ENCODE measurements at regions of chr3 and their contacts with region 1.

Region 1: GRCh38 chr3:49120438-49121131 is at the start of gene USP19:
- DNase-seq: peak; percentile 96
- H3K4me3 Mint-ChIP-seq: peak within 1 kb of the TSS; percentile 85
- H3K27ac Mint-ChIP-seq: peak within 1 kb of the TSS; percentile 86
- H3K4me1 Mint-ChIP-seq: peaks cover 16% of the 10 kb centered on the region
- H3K27me3 Mint-ChIP-seq: no peaks in the 10 kb centered on the region
- total RNA-seq, gene USP19: 44.1 to 45.3 TPM

Region 2: GRCh38 chr3:49104483-49105291 is 15.9 kb before region 1 on chr3 and contains the start of gene QARS1:
- CTCF ChIA-PET with region 1: no interaction called
- POLR2A ChIA-PET with region 1: no interaction called
- intact Hi-C with region 1: loop called (anchors 2 kb)
- DNase-seq: peak; percentile 94
- H3K4me3 Mint-ChIP-seq: peak within 1 kb of the TSS; percentile 99
- H3K27ac Mint-ChIP-seq: peak within 1 kb of the TSS; percentile 87
- H3K4me1 Mint-ChIP-seq: peaks cover 22% of the 10 kb centered on the region
- H3K27me3 Mint-ChIP-seq: no peaks in the 10 kb centered on the region
- total RNA-seq, gene QARS1: 249 to 286 TPM

Region 3: DNA sequence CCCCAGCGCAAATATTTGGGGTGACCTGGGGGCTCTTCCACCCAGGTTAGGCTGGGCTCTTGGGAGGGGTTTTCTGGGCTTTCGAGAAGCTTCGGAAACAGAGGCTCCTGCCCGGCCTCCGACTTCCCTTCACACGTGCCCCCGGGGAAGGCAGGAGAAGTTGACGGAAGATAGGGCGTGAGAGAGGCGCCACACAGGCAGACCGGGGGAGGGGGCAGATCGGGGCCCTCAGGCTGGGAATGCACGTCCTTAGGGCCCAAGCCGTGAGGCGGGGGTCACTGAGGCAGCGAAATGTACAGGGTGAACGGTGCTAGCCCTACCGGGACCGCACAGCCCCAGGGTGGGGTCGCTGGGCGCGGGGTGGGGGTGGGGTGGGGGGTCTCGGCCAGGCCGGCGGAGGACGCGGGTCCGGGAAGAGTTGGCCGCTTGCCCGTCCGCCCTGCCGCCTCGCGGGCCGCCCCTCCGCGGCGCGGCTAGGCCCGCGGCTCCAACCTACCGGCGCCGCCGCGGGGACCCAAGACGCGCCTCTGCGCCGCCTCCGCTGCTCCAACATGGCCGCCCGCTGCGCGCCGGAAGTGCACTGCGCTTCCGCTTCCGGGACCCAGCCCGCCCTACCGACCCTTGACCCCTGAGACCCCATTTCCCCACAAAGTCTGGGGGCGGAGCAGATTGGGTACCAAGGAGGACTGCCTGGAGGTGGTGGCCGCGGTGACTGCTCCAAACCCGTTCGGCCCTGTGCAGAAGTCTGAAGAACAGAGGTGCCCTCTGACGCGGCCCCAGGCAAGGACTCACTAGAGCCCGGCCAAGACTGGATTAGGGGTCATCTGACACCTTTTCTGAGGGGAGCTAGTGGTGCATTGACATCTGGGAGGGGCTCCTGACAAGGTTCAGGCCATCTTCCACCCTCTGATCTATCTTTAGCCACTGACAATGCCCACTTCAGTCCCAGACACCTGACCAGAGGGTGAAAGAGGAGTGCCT is 45.5 kb after region 1 on chr3 and contains the start of gene CCDC71:
- CTCF ChIA-PET with region 1: interaction called, 8 read pairs
- POLR2A ChIA-PET with region 1: interaction called, 3 read pairs
- intact Hi-C with region 1: loop called (anchors 5 kb)
- DNase-seq: peak; percentile 86
- H3K4me3 Mint-ChIP-seq: peak within 1 kb of the TSS; percentile 89
- H3K27ac Mint-ChIP-seq: peak within 1 kb of the TSS; percentile 83
- H3K4me1 Mint-ChIP-seq: peaks cover 33% of the 10 kb centered on the region
- H3K27me3 Mint-ChIP-seq: no peaks in the 10 kb centered on the region
- total RNA-seq, gene CCDC71: 18.8 to 19.7 TPM

Region 4: DNA sequence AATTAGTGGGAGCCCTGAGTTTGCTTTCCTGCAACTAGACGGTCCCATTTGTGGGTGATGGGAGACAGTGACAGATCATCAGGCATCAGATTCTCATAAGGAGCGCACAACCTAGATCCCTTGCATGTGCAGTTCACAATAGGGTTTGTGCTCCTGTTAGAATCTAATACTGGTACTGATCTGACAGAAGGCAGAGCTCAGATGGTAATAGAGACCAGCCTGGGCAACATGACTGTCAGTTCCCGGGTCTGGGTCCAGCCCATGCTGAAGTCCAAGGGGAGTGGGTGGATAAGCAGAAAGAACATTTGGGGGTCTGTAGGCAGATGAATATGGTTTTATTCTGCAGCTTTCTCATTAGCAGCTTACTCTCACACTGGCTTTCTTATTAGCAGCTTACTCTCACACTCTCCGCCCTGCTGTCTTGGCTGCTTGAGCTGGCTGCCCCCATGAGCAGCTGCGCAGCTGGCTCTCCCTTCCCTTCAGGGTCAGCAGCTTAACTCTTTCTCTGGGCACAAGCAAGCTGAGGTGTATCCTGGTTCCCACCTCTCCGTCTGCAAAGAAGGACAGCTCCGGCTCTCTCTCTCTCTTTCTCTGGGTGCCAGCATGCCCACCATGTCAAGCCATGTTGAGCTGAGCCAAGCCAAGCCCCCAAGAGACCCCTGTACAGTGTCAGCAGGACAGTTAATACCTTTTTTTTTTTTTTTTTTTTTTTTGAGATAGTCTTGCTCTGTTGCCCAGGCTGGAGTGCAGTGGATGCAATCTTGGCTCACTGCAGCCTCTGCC is 97.3 kb after region 1 on chr3:
- CTCF ChIA-PET with region 1: no interaction called
- POLR2A ChIA-PET with region 1: no interaction called
- intact Hi-C with region 1: no loop called
- DNase-seq: no peak
- H3K4me3 Mint-ChIP-seq: no peak overlapping the region
- H3K27ac Mint-ChIP-seq: no peak overlapping the region
- H3K4me1 Mint-ChIP-seq: no peaks in the 10 kb centered on the region
- H3K27me3 Mint-ChIP-seq: peaks cover 2% of the 10 kb centered on the region

Region 5: GRCh38 chr3:49428697-49429100 is 308.1 kb after region 1 on chr3:
- CTCF ChIA-PET with region 1: no interaction called
- POLR2A ChIA-PET with region 1: no interaction called
- intact Hi-C with region 1: no loop called
- DNase-seq: no peak
- H3K4me3 Mint-ChIP-seq: peak overlapping the region; percentile 77
- H3K27ac Mint-ChIP-seq: peak overlapping the region; percentile 73
- H3K4me1 Mint-ChIP-seq: peaks cover 14% of the 10 kb centered on the region
- H3K27me3 Mint-ChIP-seq: no peaks in the 10 kb centered on the region

Region 6: DNA sequence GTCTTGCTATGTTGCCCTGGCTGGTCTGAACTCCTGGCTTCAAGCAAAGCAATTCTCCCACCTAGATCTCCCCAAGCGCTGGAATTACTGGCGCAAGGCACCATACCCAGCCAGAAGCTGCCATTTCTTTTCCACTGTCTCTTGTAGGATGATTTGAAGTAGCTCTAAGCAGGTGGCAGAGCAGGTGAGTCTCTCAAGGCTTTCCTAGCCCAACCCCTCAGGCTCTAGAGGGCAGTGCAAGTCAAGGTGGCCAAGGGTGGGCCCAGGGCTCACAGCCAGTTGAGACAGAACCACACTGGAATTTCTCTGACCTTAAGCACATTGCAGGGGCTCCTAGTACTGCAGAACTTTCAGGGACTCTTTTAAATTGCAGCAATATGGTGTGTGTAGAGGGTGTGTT is 333.9 kb after region 1 on chr3:
- CTCF ChIA-PET with region 1: no interaction called
- POLR2A ChIA-PET with region 1: no interaction called
- intact Hi-C with region 1: no loop called
- DNase-seq: no peak
- H3K4me3 Mint-ChIP-seq: no peak overlapping the region
- H3K27ac Mint-ChIP-seq: no peak overlapping the region
- H3K4me1 Mint-ChIP-seq: no peaks in the 10 kb centered on the region
- H3K27me3 Mint-ChIP-seq: no peaks in the 10 kb centered on the region